CD4-positive, alpha-beta T cell (primary cell): ENCODE measurements at regions of chr5 and their contacts with region 1.

Region 1: GRCh38 chr5:115544436-115545350 is at the start of gene FEM1C:
- DNase-seq: peak; percentile 93 to 100 (median 96)
- ATAC-seq: peak; percentile 86
- H3K4me3 ChIP-seq: peak within 1 kb of the TSS; percentile 76
- H3K4me3 Mint-ChIP-seq: peak within 1 kb of the TSS; percentile 98
- H3K27ac ChIP-seq: peak within 1 kb of the TSS; percentile 78 to 95
- H3K27ac Mint-ChIP-seq: peak within 1 kb of the TSS; percentile 98
- H3K4me1 ChIP-seq: peaks cover 14% of the 10 kb centered on the region
- H3K4me1 Mint-ChIP-seq: peaks cover 59% of the 10 kb centered on the region
- H3K27me3 ChIP-seq: no peaks in the 10 kb centered on the region
- H3K27me3 Mint-ChIP-seq: no peaks in the 10 kb centered on the region
- CTCF ChIP-seq: no peak
- total RNA-seq, gene FEM1C: 43.3 to 44.2 TPM

Region 2: GRCh38 chr5:115169487-115170133 is 375.1 kb before region 1 on chr5 and contains the start of gene TRIM36:
- CTCF ChIA-PET with region 1: no interaction called
- POLR2A ChIA-PET with region 1: no interaction called
- intact Hi-C with region 1: loop called in 1 of 2 experiments (anchors 10 kb)
- DNase-seq: peak; percentile 66 to 92 (median 82)
- ATAC-seq: peak; percentile 90
- H3K4me3 ChIP-seq: peak within 1 kb of the TSS; percentile 69
- H3K4me3 Mint-ChIP-seq: peak within 1 kb of the TSS; percentile 85
- H3K27ac ChIP-seq: no peak within 1 kb of the TSS
- H3K27ac Mint-ChIP-seq: no peak within 1 kb of the TSS
- H3K4me1 ChIP-seq: peaks cover 22% of the 10 kb centered on the region
- H3K4me1 Mint-ChIP-seq: peaks cover 15% of the 10 kb centered on the region
- H3K27me3 ChIP-seq: peaks cover 57 to 84% of the 10 kb centered on the region in 2 experiments
- H3K27me3 Mint-ChIP-seq: peaks cover 83% of the 10 kb centered on the region
- CTCF ChIP-seq: no peak
- total RNA-seq, gene TRIM36: 0.14 TPM in 1 of 2 experiments, not detected in the other

Region 3: DNA sequence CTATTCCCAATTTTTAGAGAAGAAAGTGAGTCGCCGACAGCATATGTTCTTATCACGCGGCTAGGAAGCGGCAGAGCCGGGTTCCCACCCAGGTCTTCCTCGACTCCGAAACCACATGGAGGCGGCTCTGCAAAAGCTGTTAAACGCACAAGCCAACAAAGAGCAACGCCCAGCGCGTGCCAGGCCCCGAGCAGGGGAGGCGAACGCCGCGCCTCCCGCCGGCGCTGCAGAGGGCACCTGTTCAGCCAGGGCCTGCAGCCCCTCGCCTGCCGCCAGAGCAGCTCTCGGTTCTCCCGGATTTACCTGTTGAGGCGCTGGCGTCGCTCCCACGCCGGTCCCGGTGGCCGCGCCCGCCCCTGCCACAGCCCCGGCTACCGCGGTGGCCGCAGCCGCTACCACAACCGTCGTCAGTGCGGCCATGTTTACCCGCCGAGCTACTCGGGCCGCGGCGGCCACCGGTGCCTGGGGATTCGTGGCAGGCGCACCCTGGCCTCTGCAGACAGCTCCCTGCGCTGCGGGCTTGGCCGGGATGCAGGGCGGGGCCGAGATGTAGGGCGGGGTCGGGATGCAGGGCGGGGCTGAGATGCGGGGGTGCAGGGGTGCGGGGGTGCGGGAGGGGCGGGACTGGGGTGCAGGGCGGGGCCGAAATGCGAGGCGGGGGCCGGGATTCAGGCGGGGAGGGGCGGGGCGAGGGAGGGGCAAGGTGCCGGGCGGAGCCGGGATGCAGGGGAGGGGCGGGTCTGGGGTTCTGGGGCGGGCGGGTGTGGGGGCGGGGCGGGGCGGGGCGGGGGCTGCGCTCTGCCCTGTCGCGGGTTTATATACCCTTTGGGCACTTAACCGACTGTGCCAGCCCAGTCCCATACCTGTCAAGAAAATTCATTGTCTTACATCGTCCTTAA is 248.3 kb before region 1 on chr5 and contains the start of gene CCDC112:
- CTCF ChIA-PET with region 1: no interaction called
- POLR2A ChIA-PET with region 1: interaction called, 33 read pairs
- intact Hi-C with region 1: loop called in 1 of 2 experiments (anchors 2 kb)
- DNase-seq: peak; percentile 57 to 92 (median 76)
- ATAC-seq: peak; percentile 77
- H3K4me3 ChIP-seq: peak within 1 kb of the TSS; percentile 55
- H3K4me3 Mint-ChIP-seq: peak within 1 kb of the TSS; percentile 87
- H3K27ac ChIP-seq: no peak within 1 kb of the TSS
- H3K27ac Mint-ChIP-seq: peak within 1 kb of the TSS; percentile 10
- H3K4me1 ChIP-seq: peaks cover 12% of the 10 kb centered on the region
- H3K4me1 Mint-ChIP-seq: peaks cover 11% of the 10 kb centered on the region
- H3K27me3 ChIP-seq: no peaks in the 10 kb centered on the region
- H3K27me3 Mint-ChIP-seq: no peaks in the 10 kb centered on the region
- CTCF ChIP-seq: no peak
- total RNA-seq, gene CCDC112: 3.1 to 3.9 TPM

Region 4: DNA sequence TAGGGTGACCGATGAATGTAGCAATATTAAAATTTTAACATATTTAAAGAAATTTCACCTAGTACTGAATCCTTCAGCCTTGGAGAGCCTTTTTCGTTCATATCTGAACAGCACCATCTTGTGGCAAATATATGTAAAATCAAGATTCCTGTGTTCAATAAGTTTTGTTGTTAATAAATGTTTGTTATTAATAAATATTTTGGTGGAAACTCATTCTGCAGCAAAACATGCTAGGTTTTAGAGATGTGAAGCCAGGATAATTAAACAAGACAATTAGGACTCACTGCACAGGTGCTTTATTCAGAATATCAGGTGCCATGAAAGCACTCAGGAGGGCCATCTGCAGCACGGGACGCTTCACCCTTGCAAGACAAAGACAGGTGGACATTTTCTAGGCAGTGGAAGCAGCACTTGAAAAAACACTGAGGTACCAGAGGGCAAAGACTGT is 41.9 kb after region 1 on chr5:
- CTCF ChIA-PET with region 1: no interaction called
- POLR2A ChIA-PET with region 1: no interaction called
- intact Hi-C with region 1: loop called in 1 of 2 experiments (anchors 5 kb)
- DNase-seq: peak in 3 of 14 experiments; percentile 31 to 46 (median 44)
- ATAC-seq: no peak
- H3K4me3 ChIP-seq: no peak overlapping the region
- H3K4me3 Mint-ChIP-seq: no peak overlapping the region
- H3K27ac ChIP-seq: no peak overlapping the region
- H3K27ac Mint-ChIP-seq: no peak overlapping the region
- H3K4me1 ChIP-seq: no peaks in the 10 kb centered on the region
- H3K4me1 Mint-ChIP-seq: no peaks in the 10 kb centered on the region
- H3K27me3 ChIP-seq: no peaks in the 10 kb centered on the region
- H3K27me3 Mint-ChIP-seq: no peaks in the 10 kb centered on the region
- CTCF ChIP-seq: peak; percentile 74

Region 5: DNA sequence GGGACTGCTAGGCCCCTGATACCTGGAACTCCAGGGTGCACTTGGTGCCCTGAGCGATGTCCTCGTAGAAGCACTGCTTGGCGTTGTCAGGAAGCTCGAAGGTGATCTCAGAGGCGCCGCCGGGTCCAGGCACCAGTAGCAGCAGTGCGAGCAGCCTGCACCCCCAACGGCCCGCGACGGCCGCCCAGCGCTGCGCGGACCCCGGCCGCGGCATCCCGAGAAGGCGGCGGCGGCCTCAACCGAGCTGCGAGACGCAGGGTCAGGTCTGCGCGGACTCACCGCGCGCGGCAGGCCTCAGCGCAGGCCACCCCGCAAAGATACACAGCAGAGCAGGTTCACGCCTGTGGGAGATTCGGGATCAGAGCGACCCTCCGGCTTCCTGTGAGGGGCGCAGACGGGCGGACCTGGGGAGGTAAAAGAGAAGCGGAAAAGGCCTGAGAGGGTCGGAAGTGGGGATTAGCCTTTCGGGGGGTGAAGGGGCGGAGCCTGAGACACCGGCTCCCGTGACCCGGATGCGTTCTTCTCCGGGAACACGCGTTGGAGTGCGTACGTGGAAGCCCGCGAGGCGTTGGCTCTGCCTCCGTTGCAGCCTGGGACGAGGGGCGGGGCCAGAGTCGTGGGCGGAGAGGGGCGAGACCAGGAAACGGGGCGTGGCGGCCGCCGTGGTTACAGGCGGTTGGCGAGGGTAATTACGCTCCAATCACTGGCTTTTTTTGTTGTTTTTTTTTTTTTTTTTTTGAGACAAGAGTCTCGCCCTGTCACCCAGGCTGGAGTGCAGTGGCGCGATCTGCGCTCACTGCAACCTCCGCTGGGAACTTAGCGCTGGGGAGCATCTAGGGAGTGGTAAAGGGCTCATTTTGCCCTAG is 81.1 kb after region 1 on chr5 and contains the start of gene TMED7:
- CTCF ChIA-PET with region 1: interaction called, 4 read pairs
- POLR2A ChIA-PET with region 1: interaction called, 24 read pairs
- intact Hi-C with region 1: loop called (anchors 2 to 5 kb)
- DNase-seq: peak; percentile 98 to 100 (median 100)
- ATAC-seq: peak; percentile 88
- H3K4me3 ChIP-seq: peak within 1 kb of the TSS; percentile 82
- H3K4me3 Mint-ChIP-seq: no peak within 1 kb of the TSS
- H3K27ac ChIP-seq: peak within 1 kb of the TSS; percentile 86 to 91
- H3K27ac Mint-ChIP-seq: no peak within 1 kb of the TSS
- H3K4me1 ChIP-seq: peaks cover 24% of the 10 kb centered on the region
- H3K4me1 Mint-ChIP-seq: peaks cover 19% of the 10 kb centered on the region
- H3K27me3 ChIP-seq: no peaks in the 10 kb centered on the region
- H3K27me3 Mint-ChIP-seq: no peaks in the 10 kb centered on the region
- CTCF ChIP-seq: no peak
- total RNA-seq, gene TMED7: 50.4 to 56.7 TPM

Region 6: DNA sequence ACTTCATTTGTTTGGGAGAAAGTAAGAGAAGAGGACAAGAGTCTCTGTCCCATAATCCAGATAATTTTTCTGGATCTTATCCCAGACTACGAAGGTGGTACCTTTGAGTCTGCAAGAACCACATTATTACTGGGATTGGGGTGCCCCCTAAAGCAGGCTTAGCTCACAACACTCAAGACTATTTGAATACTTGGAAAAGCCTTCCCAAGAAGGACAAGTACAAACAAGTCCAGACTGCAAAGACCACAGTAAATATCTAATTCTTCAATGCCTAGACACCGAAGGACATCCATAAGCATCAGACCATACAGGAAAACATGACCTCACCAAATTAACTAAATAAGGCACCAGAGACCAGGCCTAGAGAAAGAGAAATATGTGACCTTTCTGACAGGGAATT is 121.3 kb after region 1 on chr5:
- CTCF ChIA-PET with region 1: no interaction called
- POLR2A ChIA-PET with region 1: no interaction called
- intact Hi-C with region 1: no loop called
- DNase-seq: no peak
- ATAC-seq: no peak
- H3K4me3 ChIP-seq: no peak overlapping the region
- H3K4me3 Mint-ChIP-seq: no peak overlapping the region
- H3K27ac ChIP-seq: no peak overlapping the region
- H3K27ac Mint-ChIP-seq: no peak overlapping the region
- H3K4me1 ChIP-seq: no peaks in the 10 kb centered on the region
- H3K4me1 Mint-ChIP-seq: no peaks in the 10 kb centered on the region
- H3K27me3 ChIP-seq: peaks cover 10% of the 10 kb centered on the region in 2 experiments
- H3K27me3 Mint-ChIP-seq: peaks cover 57% of the 10 kb centered on the region
- CTCF ChIP-seq: no peak

Region 7: DNA sequence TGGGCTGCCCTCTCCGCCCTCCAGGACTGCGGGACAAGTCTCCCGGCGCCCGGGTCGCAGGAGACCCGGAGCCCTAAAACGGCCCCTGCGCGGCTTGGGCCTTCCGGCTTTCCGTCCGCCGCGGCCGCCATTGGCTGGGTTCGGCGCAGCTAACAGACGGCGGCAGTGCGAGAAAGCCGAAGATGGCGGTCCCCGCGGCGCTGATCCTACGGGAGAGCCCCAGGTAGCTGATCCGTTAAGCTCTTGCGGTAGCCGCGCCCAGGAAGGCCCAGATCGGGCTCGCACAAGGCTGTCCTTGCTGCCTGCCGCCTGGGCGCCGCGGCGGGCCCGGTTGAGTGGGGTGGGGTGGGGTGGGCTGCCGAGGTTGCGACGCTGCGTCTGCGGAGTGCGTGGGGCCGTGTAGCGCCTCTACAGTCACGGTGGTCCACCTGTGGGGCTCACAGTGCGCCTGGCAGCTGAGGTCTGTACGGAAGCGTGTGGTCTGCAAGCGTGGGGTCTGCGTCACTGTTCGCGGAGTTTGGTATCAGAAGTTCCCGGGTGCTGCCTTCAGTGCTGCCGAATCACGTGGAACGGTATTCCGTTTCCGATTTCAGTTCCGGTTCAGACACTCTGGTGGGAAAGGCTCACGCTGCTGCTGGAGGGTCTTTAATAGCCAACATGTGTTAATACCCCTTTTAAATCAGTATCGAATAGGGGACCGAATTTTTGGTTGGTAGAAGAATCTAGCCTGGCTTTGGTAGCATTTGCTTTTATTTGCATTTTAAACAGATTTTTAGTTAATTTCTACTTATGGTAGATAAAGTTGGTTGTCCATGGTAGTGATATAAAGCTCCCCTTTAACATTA is 540.4 kb after region 1 on chr5 and contains the start of gene COMMD10:
- CTCF ChIA-PET with region 1: no interaction called
- POLR2A ChIA-PET with region 1: interaction called, 10 read pairs
- intact Hi-C with region 1: loop called in 1 of 2 experiments (anchors 5 kb)
- DNase-seq: peak; percentile 58 to 93 (median 72)
- ATAC-seq: peak; percentile 90
- H3K4me3 ChIP-seq: peak within 1 kb of the TSS; percentile 86
- H3K4me3 Mint-ChIP-seq: peak within 1 kb of the TSS; percentile 99
- H3K27ac ChIP-seq: peak within 1 kb of the TSS; percentile 81 to 82
- H3K27ac Mint-ChIP-seq: peak within 1 kb of the TSS; percentile 99
- H3K4me1 ChIP-seq: peaks cover 16% of the 10 kb centered on the region
- H3K4me1 Mint-ChIP-seq: peaks cover 76% of the 10 kb centered on the region
- H3K27me3 ChIP-seq: no peaks in the 10 kb centered on the region
- H3K27me3 Mint-ChIP-seq: no peaks in the 10 kb centered on the region
- CTCF ChIP-seq: no peak
- total RNA-seq, gene COMMD10: 26.0 to 27.6 TPM